Naive thymus-derived CD4-positive, alpha-beta T cell (primary cell): ENCODE measurements at regions of chr4 and their contacts with region 1.

Region 1: GRCh38 chr4:26410385-26411293 is 79.6 kb downstream of the CCKAR start:
- DNase-seq: peak in 6 of 9 donors; percentile 28 to 60 (median 53)
- ATAC-seq: peak; percentile 57
- H3K4me3 ChIP-seq: no peak overlapping the region
- H3K4me3 Mint-ChIP-seq: no peak overlapping the region
- H3K27ac ChIP-seq: no peak overlapping the region
- H3K27ac Mint-ChIP-seq: peak overlapping the region in 1 of 9 donors; percentile 49
- H3K4me1 ChIP-seq: no peaks in the 10 kb centered on the region
- H3K4me1 Mint-ChIP-seq: peaks cover 0 to 5% (median 0%) of the 10 kb centered on the region in 7 donors
- H3K27me3 ChIP-seq: no peaks in the 10 kb centered on the region
- H3K27me3 Mint-ChIP-seq: no peaks in the 10 kb centered on the region

Region 2: GRCh38 chr4:25842229-25842845 is 568.3 kb before region 1 on chr4:
- CTCF ChIA-PET with region 1: no interaction called
- POLR2A ChIA-PET with region 1: no interaction called
- intact Hi-C with region 1: loop called in 1 of 2 experiments (anchors 1 kb)
- DNase-seq: peak in 7 of 9 donors; percentile 24 to 51 (median 46)
- ATAC-seq: peak; percentile 78
- H3K4me3 ChIP-seq: no peak overlapping the region
- H3K4me3 Mint-ChIP-seq: peak overlapping the region; percentile 1 to 63 (median 40)
- H3K27ac ChIP-seq: no peak overlapping the region
- H3K27ac Mint-ChIP-seq: peak overlapping the region in 4 of 9 donors; percentile 16 to 84 (median 40)
- H3K4me1 ChIP-seq: peaks cover 5 to 14% of the 10 kb centered on the region in 2 donors
- H3K4me1 Mint-ChIP-seq: peaks cover 27 to 55% (median 37%) of the 10 kb centered on the region in 7 donors
- H3K27me3 ChIP-seq: no peaks in the 10 kb centered on the region
- H3K27me3 Mint-ChIP-seq: no peaks in the 10 kb centered on the region

Region 3: DNA sequence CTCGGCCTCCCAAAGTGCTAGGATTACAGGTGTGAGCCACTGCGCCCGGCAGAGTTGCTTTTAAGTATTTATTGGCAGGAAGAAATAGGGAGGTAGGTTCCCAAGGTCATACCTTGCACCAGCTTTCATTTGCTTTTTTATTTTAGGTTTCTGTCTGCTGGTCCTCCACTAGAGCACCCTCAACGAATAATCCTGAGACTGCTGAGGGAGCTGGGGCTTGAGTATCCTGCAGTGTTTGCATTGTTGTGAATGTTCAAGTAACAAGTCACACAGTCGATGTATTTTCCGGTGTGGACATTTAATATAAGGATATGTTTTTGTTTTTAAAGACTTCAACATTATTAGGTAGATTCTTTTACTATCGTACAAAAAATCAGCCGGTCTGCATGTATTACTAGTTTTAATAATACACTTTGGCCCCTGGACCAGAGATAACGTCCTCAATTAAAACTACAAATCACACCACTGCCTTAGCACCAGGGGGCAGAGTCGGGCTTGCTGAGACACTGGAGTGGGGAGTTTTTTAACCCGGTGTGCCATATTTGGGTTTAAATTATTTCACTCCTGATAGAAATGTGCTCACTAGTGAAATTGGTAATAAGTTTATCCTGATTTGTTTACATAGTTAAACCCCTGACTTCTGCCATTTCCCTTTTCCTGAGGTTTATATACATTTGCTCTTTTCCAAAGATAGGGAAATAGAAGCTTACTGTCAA is 485.0 kb before region 1 on chr4:
- CTCF ChIA-PET with region 1: no interaction called
- POLR2A ChIA-PET with region 1: no interaction called
- intact Hi-C with region 1: loop called in 1 of 2 experiments (anchors 5 kb)
- DNase-seq: no peak
- ATAC-seq: peak; percentile 40
- H3K4me3 ChIP-seq: no peak overlapping the region
- H3K4me3 Mint-ChIP-seq: no peak overlapping the region
- H3K27ac ChIP-seq: no peak overlapping the region
- H3K27ac Mint-ChIP-seq: no peak overlapping the region
- H3K4me1 ChIP-seq: peaks cover 0 to 3% of the 10 kb centered on the region in 2 donors
- H3K4me1 Mint-ChIP-seq: peaks cover 2 to 23% (median 9%) of the 10 kb centered on the region in 7 donors
- H3K27me3 ChIP-seq: no peaks in the 10 kb centered on the region
- H3K27me3 Mint-ChIP-seq: no peaks in the 10 kb centered on the region

Region 4: DNA sequence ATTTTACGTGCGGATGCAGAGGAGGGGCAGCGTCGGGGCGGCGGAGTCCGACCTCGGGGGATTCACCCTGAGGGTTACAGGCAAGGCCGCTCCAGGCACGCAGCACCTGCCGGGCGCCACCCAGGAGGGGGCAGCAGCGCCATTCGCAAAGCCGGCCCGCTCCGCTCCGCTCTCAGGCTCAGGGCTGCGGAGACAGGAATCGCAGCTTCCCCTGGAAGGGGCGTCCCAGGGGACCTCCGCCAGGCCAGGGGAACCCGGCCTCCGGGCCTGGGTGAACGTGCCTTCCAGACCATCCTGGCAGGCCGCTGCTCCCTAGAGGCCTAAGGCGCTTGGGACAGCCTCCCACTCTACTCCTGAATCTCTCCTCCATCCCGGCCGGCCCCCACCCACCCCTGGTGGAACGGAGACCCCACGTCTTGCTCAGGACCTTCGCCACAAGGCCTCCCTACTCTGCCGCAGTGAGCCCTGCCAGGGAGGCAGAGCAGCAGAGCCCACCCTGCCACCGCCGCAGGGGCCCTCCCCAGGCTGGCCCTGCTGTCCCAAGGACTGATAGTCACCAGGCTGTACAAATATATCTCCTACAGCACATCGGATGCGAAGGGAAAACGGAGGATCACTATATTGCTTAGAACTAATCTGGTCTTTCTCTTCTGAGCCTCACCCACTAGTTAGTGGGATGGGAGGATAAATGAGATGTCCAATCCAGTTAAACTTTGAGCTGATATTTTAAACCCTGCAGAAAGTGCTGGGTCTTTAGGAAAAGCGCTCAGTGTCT is 381.7 kb before region 1 on chr4:
- CTCF ChIA-PET with region 1: interaction called, 3 read pairs
- POLR2A ChIA-PET with region 1: no interaction called
- intact Hi-C with region 1: loop called (anchors 1 kb)
- DNase-seq: peak in 8 of 9 donors; percentile 11 to 82 (median 18)
- ATAC-seq: peak; percentile 80
- H3K4me3 ChIP-seq: no peak overlapping the region
- H3K4me3 Mint-ChIP-seq: peak overlapping the region in 2 of 10 donors; percentile 12 to 39
- H3K27ac ChIP-seq: no peak overlapping the region
- H3K27ac Mint-ChIP-seq: no peak overlapping the region
- H3K4me1 ChIP-seq: no peaks in the 10 kb centered on the region
- H3K4me1 Mint-ChIP-seq: peaks cover 0 to 10% (median 0%) of the 10 kb centered on the region in 7 donors
- H3K27me3 ChIP-seq: peaks cover 0 to 4% of the 10 kb centered on the region in 2 donors
- H3K27me3 Mint-ChIP-seq: peaks cover 0 to 27% (median 16%) of the 10 kb centered on the region in 5 donors

Region 5: DNA sequence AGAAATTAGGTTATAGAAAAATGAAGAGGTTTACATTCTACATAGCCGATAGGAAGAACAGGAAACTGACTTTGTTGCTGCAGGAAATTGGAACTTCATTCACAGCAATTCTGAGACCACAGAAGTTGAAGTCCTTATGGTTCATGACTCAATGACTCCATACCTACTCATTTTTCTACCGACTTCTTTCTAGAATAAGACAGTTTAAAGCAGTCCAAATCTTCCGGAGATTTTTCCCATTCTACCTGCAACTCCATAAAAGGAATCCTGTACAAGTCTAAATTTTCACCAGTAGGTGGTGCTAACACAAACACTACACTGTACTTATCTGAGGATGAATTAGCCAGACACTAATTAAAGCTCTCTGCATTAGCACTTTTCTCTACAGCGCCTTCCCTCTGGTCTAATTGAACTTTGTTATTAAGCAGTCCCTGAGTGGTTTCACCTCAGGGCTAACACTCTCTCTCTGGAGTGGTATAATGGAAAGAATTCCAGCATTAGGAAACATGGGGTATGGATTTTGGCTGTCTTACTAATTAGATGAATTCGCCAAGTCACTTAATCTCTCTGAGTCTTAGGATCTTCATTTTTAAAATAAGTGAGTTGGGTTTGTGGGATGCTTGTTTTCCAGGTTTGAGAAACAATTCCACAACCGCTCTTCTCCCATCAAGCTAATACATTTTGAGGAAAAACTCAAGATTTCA is 328.7 kb before region 1 on chr4:
- CTCF ChIA-PET with region 1: interaction called, 5 read pairs
- POLR2A ChIA-PET with region 1: no interaction called
- intact Hi-C with region 1: loop called (anchors 1 kb)
- DNase-seq: peak in 5 of 9 donors; percentile 16 to 29 (median 22)
- ATAC-seq: peak; percentile 66
- H3K4me3 ChIP-seq: no peak overlapping the region
- H3K4me3 Mint-ChIP-seq: peak overlapping the region in 1 of 10 donors; percentile 49
- H3K27ac ChIP-seq: no peak overlapping the region
- H3K27ac Mint-ChIP-seq: peak overlapping the region in 1 of 9 donors; percentile 73
- H3K4me1 ChIP-seq: no peaks in the 10 kb centered on the region
- H3K4me1 Mint-ChIP-seq: peaks cover 0 to 65% (median 6%) of the 10 kb centered on the region in 7 donors
- H3K27me3 ChIP-seq: no peaks in the 10 kb centered on the region
- H3K27me3 Mint-ChIP-seq: peaks cover 0 to 38% (median 7%) of the 10 kb centered on the region in 5 donors

Region 6: DNA sequence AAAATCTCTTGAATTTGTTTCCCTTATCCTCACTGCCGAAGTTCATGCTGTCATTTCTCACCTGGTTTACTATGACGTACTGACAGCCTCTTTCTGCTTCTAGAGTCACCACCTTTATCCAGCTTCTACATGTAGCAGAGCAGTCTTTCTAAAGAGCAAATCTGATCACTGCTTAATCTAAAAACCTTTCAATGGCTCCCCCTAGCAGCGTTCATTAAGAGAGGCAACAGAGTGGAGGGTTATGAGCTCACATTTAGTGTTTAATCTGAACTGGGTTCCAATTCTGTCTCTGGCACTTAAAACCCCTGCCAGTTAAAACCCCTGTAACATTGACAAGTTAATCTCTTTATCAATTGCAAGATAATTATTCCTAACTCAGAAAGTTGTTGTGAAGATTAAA is 85.4 kb before region 1 on chr4:
- CTCF ChIA-PET with region 1: interaction called, 12 read pairs
- POLR2A ChIA-PET with region 1: no interaction called
- intact Hi-C with region 1: loop called (anchors 1 kb)
- DNase-seq: peak in 6 of 9 donors; percentile 16 to 40 (median 26)
- ATAC-seq: peak; percentile 46
- H3K4me3 ChIP-seq: no peak overlapping the region
- H3K4me3 Mint-ChIP-seq: peak overlapping the region in 2 of 10 donors; percentile 4 to 61
- H3K27ac ChIP-seq: no peak overlapping the region
- H3K27ac Mint-ChIP-seq: peak overlapping the region in 4 of 9 donors; percentile 1 to 53 (median 9)
- H3K4me1 ChIP-seq: peaks cover 10 to 12% of the 10 kb centered on the region in 2 donors
- H3K4me1 Mint-ChIP-seq: peaks cover 41 to 58% (median 53%) of the 10 kb centered on the region in 7 donors
- H3K27me3 ChIP-seq: no peaks in the 10 kb centered on the region
- H3K27me3 Mint-ChIP-seq: no peaks in the 10 kb centered on the region